Aorta (tissue), 5 donors: ENCODE measurements at regions of chr1 and their contacts with region 1.

Region 1: GRCh38 chr1:15816674-15817073 is 9.2 kb upstream of the UQCRHL start:
- DNase-seq: no peak
- ATAC-seq: no peak
- H3K4me3 ChIP-seq: no peak overlapping the region
- H3K27ac ChIP-seq: no peak overlapping the region
- H3K4me1 ChIP-seq: no peaks in the 10 kb centered on the region
- H3K27me3 ChIP-seq: no peaks in the 10 kb centered on the region

Region 2: GRCh38 chr1:15994590-15995351 is 178.1 kb after region 1 on chr1:
- intact Hi-C with region 1: loop called in 1 of 2 experiments (anchors 5 kb)
- DNase-seq: peak; percentile 80 to 89
- ATAC-seq: peak; percentile 80
- H3K4me3 ChIP-seq: no peak overlapping the region
- H3K27ac ChIP-seq: no peak overlapping the region
- H3K4me1 ChIP-seq: no peaks in the 10 kb centered on the region
- H3K27me3 ChIP-seq: no peaks in the 10 kb centered on the region